Activated CD4-positive, alpha-beta T cell treated with anti-CD3 and anti-CD28 coated beads for 36 hours (primary cell): ENCODE measurements at regions of chr11 and their contacts with region 1.

Region 1: DNA sequence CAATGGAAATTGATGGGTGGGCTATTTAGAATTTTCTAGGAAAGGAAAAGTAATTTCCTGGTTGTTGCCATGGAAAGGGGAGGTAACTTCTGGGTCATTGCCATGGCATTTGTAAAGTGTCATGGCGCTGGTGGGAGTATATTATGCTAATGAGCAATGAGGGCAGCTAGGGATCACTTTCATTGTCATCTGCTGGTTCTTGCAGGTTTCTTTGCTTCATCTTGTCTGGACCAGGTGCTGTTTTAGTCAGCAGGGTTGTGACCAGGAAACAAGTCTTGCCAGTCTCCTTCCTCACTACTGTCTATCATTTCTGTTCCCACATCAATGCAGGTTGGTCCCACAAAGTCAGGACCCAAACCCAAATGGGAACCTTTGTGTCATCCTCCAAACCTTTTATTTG is 237.6 kb upstream of the C11orf87 start:
- DNase-seq: no peak
- ATAC-seq: no peak
- H3K4me3 Mint-ChIP-seq: no peak overlapping the region
- H3K27ac Mint-ChIP-seq: no peak overlapping the region
- H3K4me1 Mint-ChIP-seq: no peaks in the 10 kb centered on the region
- H3K27me3 Mint-ChIP-seq: no peaks in the 10 kb centered on the region

Region 2: GRCh38 chr11:109123816-109124787 is 60.3 kb before region 1 on chr11:
- CTCF ChIA-PET with region 1: no interaction called
- POLR2A ChIA-PET with region 1: no interaction called
- intact Hi-C with region 1: loop called in 1 of 2 experiments (anchors 10 kb)
- DNase-seq: no peak
- ATAC-seq: no peak
- H3K4me3 Mint-ChIP-seq: no peak overlapping the region
- H3K27ac Mint-ChIP-seq: no peak overlapping the region
- H3K4me1 Mint-ChIP-seq: no peaks in the 10 kb centered on the region
- H3K27me3 Mint-ChIP-seq: no peaks in the 10 kb centered on the region

Region 3: GRCh38 chr11:109229682-109230081 is 45.3 kb after region 1 on chr11:
- CTCF ChIA-PET with region 1: no interaction called
- POLR2A ChIA-PET with region 1: no interaction called
- intact Hi-C with region 1: no loop called
- DNase-seq: no peak
- ATAC-seq: no peak
- H3K4me3 Mint-ChIP-seq: no peak overlapping the region
- H3K27ac Mint-ChIP-seq: no peak overlapping the region
- H3K4me1 Mint-ChIP-seq: no peaks in the 10 kb centered on the region
- H3K27me3 Mint-ChIP-seq: no peaks in the 10 kb centered on the region